Gastrocnemius medialis (tissue), 4 donors: ENCODE measurements at regions of chr4 and their contacts with region 1.

Region 1: GRCh38 chr4:149897783-149898182 is 82.1 kb upstream of the IQCM start:
- DNase-seq: no peak
- ATAC-seq: no peak
- H3K4me3 ChIP-seq: no peak overlapping the region
- H3K27ac ChIP-seq: no peak overlapping the region
- H3K4me1 ChIP-seq: no peaks in the 10 kb centered on the region
- H3K27me3 ChIP-seq: no peaks in the 10 kb centered on the region
- CTCF ChIP-seq: peak in 1 of 5 experiments; percentile 9
- POLR2A ChIP-seq: no peak

Region 2: DNA sequence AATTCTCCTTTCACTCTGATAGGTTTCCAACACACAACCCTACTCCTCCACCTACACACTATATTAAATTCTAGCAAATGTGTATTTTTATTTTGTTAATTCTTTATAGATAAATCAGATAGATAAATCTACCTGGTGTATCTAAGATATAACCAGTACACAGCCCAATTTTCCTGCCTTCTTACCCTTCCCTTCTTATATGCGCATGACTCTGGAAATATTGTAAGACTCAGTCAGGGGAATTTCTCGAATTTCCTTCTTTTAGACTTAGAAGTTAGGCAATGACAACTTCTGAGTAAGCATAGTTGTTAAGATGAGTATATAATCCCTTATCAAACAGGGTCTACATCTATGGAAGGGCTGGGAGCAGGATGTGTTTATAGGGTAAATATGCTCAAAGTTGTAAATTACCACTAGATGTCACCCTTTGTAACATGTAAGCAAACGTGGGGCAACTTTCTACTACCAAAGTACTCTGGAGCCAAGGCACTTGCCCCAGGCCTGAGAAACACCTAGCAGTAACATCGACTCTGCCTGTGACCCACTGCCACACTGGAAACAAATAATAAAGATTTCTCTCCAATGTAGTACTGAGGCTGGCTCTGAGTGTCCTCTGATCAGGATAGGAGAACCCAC is 526.9 kb before region 1 on chr4:
- in situ Hi-C with region 1: loop called in 1 of 4 experiments (anchors 25 kb)
- intact Hi-C with region 1: loop called (anchors 10 kb)
- DNase-seq: no peak
- ATAC-seq: no peak
- H3K4me3 ChIP-seq: no peak overlapping the region
- H3K27ac ChIP-seq: no peak overlapping the region
- H3K4me1 ChIP-seq: no peaks in the 10 kb centered on the region
- H3K27me3 ChIP-seq: no peaks in the 10 kb centered on the region
- CTCF ChIP-seq: no peak
- POLR2A ChIP-seq: no peak

Region 3: DNA sequence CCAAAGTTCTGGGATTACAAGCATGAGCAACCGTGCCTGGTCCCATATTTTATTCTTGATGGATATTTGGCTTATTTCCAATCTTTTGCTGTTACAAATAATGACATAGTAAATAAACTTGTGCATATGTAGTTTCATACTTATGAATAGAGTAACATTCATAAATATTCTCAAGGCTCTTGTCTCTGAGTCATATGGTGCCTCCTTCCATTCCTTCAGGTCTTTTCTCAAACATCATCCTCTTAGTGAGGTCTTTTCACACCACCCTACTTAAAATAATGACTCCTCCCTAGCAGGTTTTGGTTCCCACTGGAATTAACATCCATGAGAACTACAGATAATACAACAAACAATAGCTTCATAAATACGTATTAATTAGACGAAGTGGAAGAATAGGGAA is 498.8 kb before region 1 on chr4:
- in situ Hi-C with region 1: loop called in 1 of 4 experiments (anchors 25 kb)
- intact Hi-C with region 1: no loop called
- DNase-seq: no peak
- ATAC-seq: no peak
- H3K4me3 ChIP-seq: no peak overlapping the region
- H3K27ac ChIP-seq: no peak overlapping the region
- H3K4me1 ChIP-seq: no peaks in the 10 kb centered on the region
- H3K27me3 ChIP-seq: no peaks in the 10 kb centered on the region
- CTCF ChIP-seq: no peak
- POLR2A ChIP-seq: no peak

Region 4: GRCh38 chr4:150251752-150252190 is 354.0 kb after region 1 on chr4:
- in situ Hi-C with region 1: no loop called
- intact Hi-C with region 1: no loop called
- DNase-seq: no peak
- ATAC-seq: no peak
- H3K4me3 ChIP-seq: no peak overlapping the region
- H3K27ac ChIP-seq: no peak overlapping the region
- H3K4me1 ChIP-seq: no peaks in the 10 kb centered on the region
- H3K27me3 ChIP-seq: no peaks in the 10 kb centered on the region
- CTCF ChIP-seq: no peak
- POLR2A ChIP-seq: no peak